ENCODE measurements at regions of chr11 and their contacts with region 1.

Region 1: DNA sequence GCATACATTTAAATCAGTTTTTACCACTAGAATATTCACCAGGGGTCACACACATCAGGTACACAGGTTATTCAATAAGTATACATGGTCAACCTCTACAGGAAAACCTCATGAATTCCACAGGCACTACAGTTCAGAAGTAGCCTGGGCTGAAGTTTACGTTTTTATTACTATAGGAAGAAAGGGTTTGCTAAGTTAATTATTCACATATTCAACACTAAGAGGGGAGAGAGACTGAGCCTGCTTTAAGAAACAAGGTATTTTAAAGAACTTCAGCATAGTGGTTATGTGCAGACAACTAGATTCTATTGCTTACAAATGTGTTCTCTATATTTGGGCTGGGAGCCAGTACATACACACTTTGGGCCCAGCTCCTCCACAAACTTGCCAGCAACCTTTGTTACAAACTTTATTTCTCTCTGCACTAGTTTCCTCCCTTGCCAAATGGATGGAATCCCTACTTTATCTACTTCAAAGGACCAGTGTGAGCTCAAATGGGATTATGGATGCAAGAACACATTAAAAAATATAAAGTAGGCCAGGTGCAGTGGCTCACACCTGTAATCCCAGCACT is 31.9 kb downstream of the IL18BP start:
- DNase-seq: no peak
- H3K4me3 ChIP-seq: no peak overlapping the region
- H3K27ac ChIP-seq: no peak overlapping the region
- H3K4me1 ChIP-seq: peaks cover 2 to 8% of the 10 kb centered on the region in 2 experiments; a peak in 3 of 4 replicates
- H3K27me3 ChIP-seq: no peaks in the 10 kb centered on the region
- CTCF ChIP-seq: no peak
- EP300 ChIP-seq: no peak
- RAD21 ChIP-seq: no peak

Region 2: DNA sequence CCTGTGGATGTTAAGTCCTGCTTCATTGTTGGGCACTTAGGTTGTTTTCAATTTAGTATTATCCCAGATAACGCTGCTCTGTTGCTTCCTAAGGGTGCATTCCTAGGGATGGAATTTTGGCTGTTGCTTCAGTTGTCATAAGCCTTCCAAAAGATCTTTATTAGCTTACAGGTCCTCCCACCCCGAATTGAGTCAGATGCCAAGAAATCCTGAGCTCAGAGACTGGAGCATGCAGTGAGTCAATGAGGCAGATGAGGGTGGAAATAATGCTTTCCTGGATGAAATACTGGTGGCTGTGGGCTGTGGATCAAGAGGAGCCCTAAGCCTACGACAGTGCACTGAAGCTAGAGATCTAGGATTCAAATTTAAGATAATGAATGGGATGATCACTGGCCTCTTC is 42.5 kb before region 1 on chr11:
- CTCF ChIA-PET with region 1: interaction called, 20 read pairs
- POLR2A ChIA-PET with region 1: no interaction called
- DNase-seq: no peak
- H3K4me3 ChIP-seq: no peak overlapping the region
- H3K27ac ChIP-seq: peak overlapping the region; percentile 27 to 51; a peak in 3 of 4 replicates
- H3K4me1 ChIP-seq: peaks cover 0 to 16% of the 10 kb centered on the region in 2 experiments; a peak in 2 of 4 replicates
- H3K27me3 ChIP-seq: no peaks in the 10 kb centered on the region
- CTCF ChIP-seq: no peak
- EP300 ChIP-seq: no peak
- RAD21 ChIP-seq: no peak

Region 3: GRCh38 chr11:72015511-72016171 is 14.9 kb before region 1 on chr11:
- CTCF ChIA-PET with region 1: interaction called, 24 read pairs
- POLR2A ChIA-PET with region 1: interaction called, 3 read pairs
- DNase-seq: no peak
- H3K4me3 ChIP-seq: no peak overlapping the region
- H3K27ac ChIP-seq: no peak overlapping the region; a peak in 1 of 4 replicates
- H3K4me1 ChIP-seq: no peaks in the 10 kb centered on the region; a peak in 1 of 4 replicates
- H3K27me3 ChIP-seq: no peaks in the 10 kb centered on the region
- CTCF ChIP-seq: peak; percentile 39; the same call in 1 of the 2 replicates
- EP300 ChIP-seq: no peak
- RAD21 ChIP-seq: peak; percentile 19; the same call in 1 of the 2 replicates

Region 4: GRCh38 chr11:72040726-72041441 is 10.3 kb after region 1 on chr11:
- CTCF ChIA-PET with region 1: interaction called, 35 read pairs
- POLR2A ChIA-PET with region 1: interaction called, 21 read pairs
- DNase-seq: peak; percentile 75
- H3K4me3 ChIP-seq: peak overlapping the region; percentile 64 to 67
- H3K27ac ChIP-seq: peak overlapping the region; percentile 97 to 99
- H3K4me1 ChIP-seq: peaks cover 18 to 45% of the 10 kb centered on the region in 2 experiments
- H3K27me3 ChIP-seq: no peaks in the 10 kb centered on the region
- CTCF ChIP-seq: no peak
- EP300 ChIP-seq: no peak
- RAD21 ChIP-seq: no peak

Region 5: DNA sequence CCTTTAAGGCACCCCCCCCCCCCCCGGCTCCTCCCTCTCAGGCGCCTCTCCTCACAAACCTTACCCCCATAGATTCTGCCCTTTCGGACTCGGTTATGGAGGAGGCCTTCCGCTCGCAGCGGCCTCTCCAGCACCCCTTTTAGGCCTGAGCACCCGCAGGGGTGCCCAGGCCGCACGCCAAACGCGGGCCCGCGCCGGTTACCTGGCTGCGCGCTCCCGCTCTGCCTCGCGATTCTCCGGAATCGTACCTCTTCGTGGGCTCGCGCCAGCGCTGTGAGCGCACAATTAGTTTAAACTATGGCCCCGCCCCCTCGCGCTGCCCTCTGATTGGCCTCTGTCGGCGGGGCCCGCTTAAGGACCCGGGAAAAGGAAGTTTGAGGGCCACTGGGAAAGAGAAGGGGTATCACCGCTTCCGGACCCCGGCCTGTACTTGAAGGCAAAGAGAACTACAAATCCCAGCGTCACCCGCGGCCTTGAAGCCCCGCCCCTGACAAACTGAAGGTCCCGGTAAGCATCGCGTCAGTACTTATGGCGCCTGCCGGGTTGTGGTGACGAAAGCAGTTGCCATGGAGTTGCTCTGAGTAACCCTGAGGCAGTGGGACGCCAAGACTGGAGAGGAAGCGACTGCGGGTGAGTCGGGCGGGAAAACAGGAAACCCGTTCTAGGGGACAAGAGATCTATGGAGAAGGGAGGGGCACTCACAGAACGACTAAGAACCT is 49.9 kb after region 1 on chr11 and contains the starts of genes LRRC51 and NUMA1:
- CTCF ChIA-PET with region 1: interaction called, 99 read pairs
- POLR2A ChIA-PET with region 1: interaction called, 3 read pairs
- DNase-seq: peak; percentile 92
- H3K4me3 ChIP-seq: peak within 1 kb of the TSS; percentile 70 to 78
- H3K27ac ChIP-seq: peak within 1 kb of the TSS; percentile 88
- H3K4me1 ChIP-seq: peaks cover 8 to 19% of the 10 kb centered on the region in 2 experiments; a peak in 3 of 4 replicates
- H3K27me3 ChIP-seq: no peaks in the 10 kb centered on the region
- CTCF ChIP-seq: no peak
- EP300 ChIP-seq: no peak; a peak in 1 of 4 replicates
- RAD21 ChIP-seq: no peak
- polyA plus RNA-seq, gene LRRC51: 7.3 and 8.0 TPM in 2 replicates
- polyA plus RNA-seq, gene NUMA1: 111 TPM in 2 replicates

Region 6: GRCh38 chr11:72091005-72091691 is 60.6 kb after region 1 on chr11:
- CTCF ChIA-PET with region 1: interaction called, 416 read pairs
- POLR2A ChIA-PET with region 1: interaction called, 13 read pairs
- DNase-seq: peak; percentile 78
- H3K4me3 ChIP-seq: no peak overlapping the region; a peak in 1 of 4 replicates
- H3K27ac ChIP-seq: no peak overlapping the region
- H3K4me1 ChIP-seq: peaks cover 0 to 16% of the 10 kb centered on the region in 2 experiments; a peak in 2 of 4 replicates
- H3K27me3 ChIP-seq: no peaks in the 10 kb centered on the region
- CTCF ChIP-seq: peak; percentile 88
- EP300 ChIP-seq: no peak
- RAD21 ChIP-seq: peak; percentile 86